ENCODE measurements at regions of chr22 and their contacts with region 1.

Region 1: DNA sequence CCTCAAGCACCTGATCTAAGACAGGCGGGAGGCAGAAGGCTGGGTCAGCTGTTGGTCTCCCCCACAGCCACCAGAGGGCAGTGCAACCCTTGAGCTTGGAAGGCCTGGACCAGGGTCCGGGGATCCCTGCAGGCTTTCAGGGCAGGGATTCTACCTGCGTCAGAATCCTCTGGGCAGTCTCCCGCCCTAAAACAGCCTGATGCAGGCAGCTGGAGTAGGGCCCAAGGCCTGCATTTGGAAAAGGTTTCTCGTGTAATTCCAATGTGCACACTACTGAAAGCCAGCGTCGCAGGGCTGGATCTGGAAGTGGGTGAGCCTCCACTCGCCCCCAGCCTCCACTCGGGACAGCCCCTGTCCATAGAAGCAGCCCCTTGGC is 31.8 kb downstream of the BID start:
- DNase-seq: peak; percentile 62 to 86
- H3K4me3 ChIP-seq: no peak overlapping the region
- H3K27ac ChIP-seq: no peak overlapping the region
- H3K4me1 ChIP-seq: peaks cover 0 to 19% (median 10%) of the 10 kb centered on the region in 4 donors
- H3K27me3 ChIP-seq: no peaks in the 10 kb centered on the region
- CTCF ChIP-seq: peak in 5 of 7 experiments; percentile 53 to 80 (median 76)
- EP300 ChIP-seq: no peak
- POLR2A ChIP-seq: no peak

Region 2: GRCh38 chr22:17552737-17553136 is 189.8 kb before region 1 on chr22:
- intact Hi-C with region 1: loop called (anchors 10 kb)
- DNase-seq: no peak
- H3K4me3 ChIP-seq: no peak overlapping the region
- H3K27ac ChIP-seq: no peak overlapping the region
- H3K4me1 ChIP-seq: no peaks in the 10 kb centered on the region
- H3K27me3 ChIP-seq: no peaks in the 10 kb centered on the region
- CTCF ChIP-seq: no peak
- EP300 ChIP-seq: no peak
- POLR2A ChIP-seq: no peak

Region 3: GRCh38 chr22:17797721-17798559 is 55.4 kb after region 1 on chr22:
- intact Hi-C with region 1: no loop called
- DNase-seq: peak in 1 of 2 donors; percentile 45
- H3K4me3 ChIP-seq: no peak overlapping the region
- H3K27ac ChIP-seq: no peak overlapping the region
- H3K4me1 ChIP-seq: peaks cover 0 to 7% (median 3%) of the 10 kb centered on the region in 4 donors
- H3K27me3 ChIP-seq: no peaks in the 10 kb centered on the region
- CTCF ChIP-seq: no peak
- EP300 ChIP-seq: no peak
- POLR2A ChIP-seq: no peak

Region 4: DNA sequence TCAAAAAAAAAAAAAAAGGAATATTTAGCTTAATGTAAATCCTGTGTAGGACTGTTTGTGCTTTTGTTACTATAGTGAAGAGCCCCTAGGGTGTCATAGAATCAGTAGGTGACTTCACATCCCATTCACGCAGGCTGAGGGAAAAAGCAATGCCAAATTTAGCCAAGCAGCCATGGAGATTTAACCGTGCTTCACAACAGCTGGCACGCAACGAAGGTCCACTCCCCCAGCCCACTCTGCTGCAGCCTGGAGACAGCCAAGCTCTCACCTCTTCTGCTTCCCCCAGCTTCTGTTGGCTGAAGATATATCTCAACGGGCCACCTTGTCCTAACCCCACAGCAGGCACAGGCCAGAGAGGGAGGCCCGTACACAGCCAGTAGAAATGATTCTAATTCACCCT is 110.6 kb after region 1 on chr22:
- intact Hi-C with region 1: no loop called
- DNase-seq: peak in 1 of 2 donors; percentile 79
- H3K4me3 ChIP-seq: no peak overlapping the region
- H3K27ac ChIP-seq: peak overlapping the region in 3 of 5 donors; percentile 70 to 87 (median 70)
- H3K4me1 ChIP-seq: peaks cover 0 to 35% (median 14%) of the 10 kb centered on the region in 4 donors
- H3K27me3 ChIP-seq: no peaks in the 10 kb centered on the region
- CTCF ChIP-seq: no peak
- EP300 ChIP-seq: peak; percentile 79
- POLR2A ChIP-seq: no peak